ENCODE measurements at regions of chr9 and their contacts with region 1.

Region 1: GRCh38 chr9:69421908-69422801 is 97.1 kb downstream of the ENTREP1 start:
- DNase-seq: peak; percentile 34 to 68 (median 65)
- ATAC-seq: peak; percentile 73 to 81
- H3K4me3 ChIP-seq: no peak overlapping the region
- H3K27ac ChIP-seq: no peak overlapping the region
- H3K4me1 ChIP-seq: no peaks in the 10 kb centered on the region
- H3K27me3 ChIP-seq: no peaks in the 10 kb centered on the region

Region 2: GRCh38 chr9:69549310-69550202 is 127.4 kb after region 1 on chr9:
- intact Hi-C with region 1: loop called (anchors 2 to 5 kb)
- DNase-seq: peak in 1 of 3 donors; percentile 36
- ATAC-seq: peak; percentile 43 to 69
- H3K4me3 ChIP-seq: no peak overlapping the region
- H3K27ac ChIP-seq: no peak overlapping the region
- H3K4me1 ChIP-seq: peaks cover 3% of the 10 kb centered on the region
- H3K27me3 ChIP-seq: no peaks in the 10 kb centered on the region

Region 3: DNA sequence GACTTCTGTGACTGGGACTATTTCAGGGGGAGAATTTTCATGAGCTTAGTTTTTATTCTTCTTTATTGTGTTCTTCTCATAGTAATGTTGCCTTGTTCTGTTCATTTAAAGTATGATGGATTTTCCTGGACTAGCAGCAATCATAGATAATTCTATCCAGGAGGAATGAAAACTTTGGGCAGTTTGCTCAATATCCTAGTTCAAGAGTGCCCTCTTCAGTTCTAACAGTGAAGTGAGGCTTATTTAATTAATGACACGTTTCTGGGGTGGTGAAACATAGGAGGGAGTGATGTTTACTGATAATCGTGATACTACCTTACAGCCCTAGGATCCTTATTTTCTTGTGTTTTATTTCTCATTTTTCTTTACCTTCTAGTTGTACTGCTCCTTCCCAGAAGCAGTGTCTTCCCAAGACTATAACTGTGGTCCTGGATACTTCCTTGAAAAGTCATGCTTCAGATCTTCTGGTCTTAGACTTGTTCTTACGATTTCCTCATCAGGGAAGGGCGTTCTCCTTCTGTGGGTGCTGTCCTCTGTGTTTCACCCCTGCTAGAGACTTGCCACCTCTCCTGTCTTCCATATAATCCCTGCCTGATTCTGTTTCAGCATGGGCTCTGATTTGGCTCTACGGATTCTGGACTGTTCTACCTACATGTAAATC is 455.8 kb after region 1 on chr9:
- intact Hi-C with region 1: loop called in 3 of 4 experiments (anchors 5 to 10 kb)
- DNase-seq: no peak
- ATAC-seq: peak; percentile 40 to 60
- H3K4me3 ChIP-seq: no peak overlapping the region
- H3K27ac ChIP-seq: no peak overlapping the region
- H3K4me1 ChIP-seq: no peaks in the 10 kb centered on the region
- H3K27me3 ChIP-seq: no peaks in the 10 kb centered on the region

Region 4: DNA sequence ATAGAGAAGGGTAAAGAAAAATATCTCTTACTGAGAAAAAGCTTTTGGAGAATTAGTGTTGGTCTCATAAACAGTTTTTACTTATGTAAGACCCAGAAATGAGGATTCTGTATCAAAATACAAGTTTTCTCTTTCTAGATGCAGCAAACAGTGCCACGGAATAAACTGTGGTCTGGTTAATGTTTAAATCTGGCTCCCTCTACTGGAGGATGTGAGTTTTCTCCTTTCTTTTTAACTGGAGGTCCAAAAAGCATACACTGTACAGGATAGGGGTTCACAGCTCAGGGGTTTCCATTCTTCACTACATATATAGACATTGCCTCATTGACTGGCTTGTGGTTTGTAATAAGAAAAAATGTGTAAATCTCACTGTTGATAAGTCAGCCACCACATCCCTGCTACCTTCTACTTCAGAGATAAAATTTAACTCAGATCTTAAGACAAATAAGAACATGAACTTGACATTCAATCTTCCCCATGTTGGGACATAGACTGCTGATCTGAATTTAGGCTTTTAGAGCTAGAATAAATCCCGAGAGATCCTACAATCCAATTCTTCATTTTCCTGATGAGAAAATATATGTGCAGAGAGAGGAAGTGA is 497.4 kb after region 1 on chr9:
- intact Hi-C with region 1: loop called (anchors 5 to 10 kb)
- DNase-seq: no peak
- ATAC-seq: peak; percentile 79 to 80
- H3K4me3 ChIP-seq: no peak overlapping the region
- H3K27ac ChIP-seq: no peak overlapping the region
- H3K4me1 ChIP-seq: no peaks in the 10 kb centered on the region
- H3K27me3 ChIP-seq: no peaks in the 10 kb centered on the region

Measured in right cardiac atrium (tissue), 5 donors.